Common myeloid progenitor, CD34-positive (primary cell): ENCODE measurements at regions of chr10 and their contacts with region 1.

Region 1: DNA sequence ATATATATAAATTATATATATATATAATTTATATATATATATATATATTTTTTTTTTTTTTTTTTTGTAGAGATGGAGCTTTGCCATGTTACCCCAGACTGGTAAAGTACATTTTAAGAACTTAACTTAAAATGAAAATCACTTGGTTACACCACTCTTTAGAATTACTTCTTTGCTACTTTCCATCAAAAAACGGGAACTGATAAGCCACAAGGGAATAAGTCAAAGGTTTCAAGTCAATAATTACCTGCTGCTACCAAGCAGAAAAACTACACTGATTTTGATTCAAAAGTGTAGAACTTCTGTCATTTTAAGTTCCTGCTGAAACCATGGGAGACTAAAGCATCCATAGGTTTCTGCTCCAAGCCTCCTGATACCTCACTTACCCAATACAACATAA is 12.2 kb downstream of the PPA1 start:
- DNase-seq: peak in 1 of 3 donors; percentile 9
- H3K4me3 ChIP-seq: peak overlapping the region in 1 of 7 experiments; percentile 37
- H3K27ac ChIP-seq: no peak overlapping the region
- H3K4me1 ChIP-seq: peaks cover 0 to 3% (median 0%) of the 10 kb centered on the region in 4 experiments
- H3K27me3 ChIP-seq: no peaks in the 10 kb centered on the region

Region 2: DNA sequence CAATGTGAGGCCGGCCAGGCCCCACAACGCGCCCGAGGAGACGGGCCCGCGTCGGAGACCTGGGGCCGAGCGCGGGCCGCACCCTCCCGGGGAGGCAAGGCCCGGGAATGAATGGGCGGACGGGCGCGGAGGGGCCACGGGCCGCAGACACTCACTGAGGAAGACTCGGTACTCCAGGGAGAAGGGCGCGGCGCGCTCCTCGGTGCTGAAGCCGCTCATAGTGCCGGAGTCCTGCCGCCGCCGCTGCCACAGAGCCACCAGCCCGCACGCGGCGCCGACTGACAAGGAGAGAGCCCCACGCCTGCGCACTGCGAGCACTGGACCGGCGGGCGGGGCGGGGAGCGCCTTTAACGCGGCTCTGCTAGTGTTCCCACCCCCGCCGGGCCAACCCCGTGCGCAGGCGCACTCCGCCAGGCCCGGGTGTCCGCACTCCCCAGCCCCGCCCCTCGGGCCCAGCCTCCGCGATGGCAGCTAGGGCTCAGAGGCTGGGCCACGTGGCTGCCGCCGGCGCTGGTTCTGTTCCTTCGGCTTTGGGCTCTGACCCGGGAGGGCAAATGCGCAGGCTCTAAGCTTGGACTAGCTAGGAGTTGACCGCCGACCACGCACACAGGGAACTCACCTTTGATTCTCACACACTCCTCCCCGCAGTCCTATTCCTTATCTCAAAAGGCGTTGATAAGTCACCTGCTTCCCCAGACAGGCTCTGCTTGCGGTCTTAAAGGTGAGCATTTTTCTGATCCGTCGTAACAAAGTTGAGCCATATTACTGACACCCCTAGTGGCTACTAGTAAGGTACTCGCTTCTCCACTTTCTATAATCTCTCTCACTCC is 12.3 kb after region 1 on chr10 and contains the start of gene PPA1:
- CTCF ChIA-PET with region 1: interaction called, 10 read pairs
- POLR2A ChIA-PET with region 1: no interaction called
- DNase-seq: peak; percentile 95 to 97 (median 96)
- H3K4me3 ChIP-seq: peak within 1 kb of the TSS; percentile 67 to 88 (median 79)
- H3K27ac ChIP-seq: peak within 1 kb of the TSS in 1 of 2 experiments; percentile 49
- H3K4me1 ChIP-seq: peaks cover 6 to 21% (median 19%) of the 10 kb centered on the region in 4 experiments
- H3K27me3 ChIP-seq: no peaks in the 10 kb centered on the region

Region 3: GRCh38 chr10:70267161-70267933 is 46.3 kb after region 1 on chr10:
- CTCF ChIA-PET with region 1: interaction called, 13 read pairs
- POLR2A ChIA-PET with region 1: no interaction called
- DNase-seq: no peak
- H3K4me3 ChIP-seq: no peak overlapping the region
- H3K27ac ChIP-seq: no peak overlapping the region
- H3K4me1 ChIP-seq: no peaks in the 10 kb centered on the region
- H3K27me3 ChIP-seq: peaks cover 0 to 20% (median 4%) of the 10 kb centered on the region in 5 experiments

Region 4: DNA sequence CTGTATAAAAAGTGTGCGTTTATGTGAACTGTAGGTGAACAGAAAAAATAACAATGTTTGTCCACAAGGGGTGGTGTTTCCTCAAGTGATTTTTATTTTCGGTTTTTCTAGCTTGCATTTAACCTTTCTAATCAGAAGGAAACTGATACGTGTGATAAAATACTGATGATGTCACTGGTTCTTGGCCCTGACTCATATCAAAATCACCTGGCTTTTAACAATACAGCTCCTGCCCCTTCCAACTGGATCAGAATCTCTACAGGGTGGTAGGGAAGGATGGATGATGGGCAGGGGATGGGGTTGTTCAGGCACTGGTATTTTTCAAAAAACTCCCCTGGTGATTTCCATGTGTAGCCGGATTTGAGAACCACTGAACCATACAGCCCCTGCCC is 51.9 kb after region 1 on chr10:
- CTCF ChIA-PET with region 1: interaction called, 13 read pairs
- POLR2A ChIA-PET with region 1: no interaction called
- DNase-seq: peak; percentile 52 to 75 (median 72)
- H3K4me3 ChIP-seq: peak overlapping the region in 1 of 7 experiments; percentile 8
- H3K27ac ChIP-seq: no peak overlapping the region
- H3K4me1 ChIP-seq: peaks cover 0 to 2% (median 0%) of the 10 kb centered on the region in 4 experiments
- H3K27me3 ChIP-seq: peaks cover 0 to 19% (median 0%) of the 10 kb centered on the region in 5 experiments

Region 5: DNA sequence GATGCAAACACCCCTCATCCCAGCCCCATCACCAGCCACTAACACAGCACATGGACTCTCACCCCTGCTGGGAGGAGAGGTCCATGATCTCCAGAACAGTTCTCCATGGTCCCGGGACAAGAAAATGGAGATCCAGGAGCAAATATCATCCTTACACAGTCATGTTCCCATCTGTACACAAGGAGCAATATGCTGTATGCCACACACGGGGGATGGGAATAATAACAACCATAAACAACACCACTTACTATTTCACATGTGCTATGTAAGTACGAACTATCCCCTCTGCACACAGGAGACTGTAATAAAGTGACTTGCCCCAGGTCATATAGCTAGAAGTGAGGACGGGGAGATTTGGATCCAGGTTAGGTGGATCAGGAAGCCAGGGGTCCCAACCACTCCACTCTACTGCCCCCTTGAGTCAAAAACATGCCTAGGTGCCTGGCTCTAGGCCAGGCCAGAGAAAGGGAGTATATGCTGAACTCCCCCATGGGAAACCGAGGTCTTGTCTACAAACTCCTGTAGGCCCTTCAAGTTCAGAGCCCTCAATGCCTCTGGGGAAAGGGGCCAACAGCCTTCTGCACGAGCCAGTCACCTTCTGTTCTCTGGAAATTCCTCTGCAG is 127.3 kb after region 1 on chr10:
- CTCF ChIA-PET with region 1: interaction called, 16 read pairs
- POLR2A ChIA-PET with region 1: no interaction called
- DNase-seq: peak; percentile 30 to 60 (median 52)
- H3K4me3 ChIP-seq: no peak overlapping the region
- H3K27ac ChIP-seq: no peak overlapping the region
- H3K4me1 ChIP-seq: peaks cover 0 to 7% (median 0%) of the 10 kb centered on the region in 4 experiments
- H3K27me3 ChIP-seq: peaks cover 0 to 11% (median under 1%) of the 10 kb centered on the region in 5 experiments

Region 6: GRCh38 chr10:70376436-70377378 is 155.7 kb after region 1 on chr10:
- CTCF ChIA-PET with region 1: interaction called, 10 read pairs
- POLR2A ChIA-PET with region 1: no interaction called
- DNase-seq: no peak
- H3K4me3 ChIP-seq: no peak overlapping the region
- H3K27ac ChIP-seq: no peak overlapping the region
- H3K4me1 ChIP-seq: peaks cover 0 to 7% (median 5%) of the 10 kb centered on the region in 4 experiments
- H3K27me3 ChIP-seq: peaks cover 0 to 6% (median 0%) of the 10 kb centered on the region in 5 experiments